ENCODE measurements at regions of chr13 and their contacts with region 1.

Region 1: GRCh38 chr13:99057310-99057975 is 79.6 kb upstream of the DOCK9 start:
- DNase-seq: no peak
- H3K4me3 ChIP-seq: no peak overlapping the region
- H3K4me3 Mint-ChIP-seq: peak overlapping the region in 1 of 8 donors; percentile 6
- H3K27ac ChIP-seq: no peak overlapping the region
- H3K27ac Mint-ChIP-seq: peak overlapping the region; percentile 29 to 79 (median 64)
- H3K4me1 ChIP-seq: peaks cover 84% of the 10 kb centered on the region
- H3K4me1 Mint-ChIP-seq: peaks cover 55 to 94% (median 80%) of the 10 kb centered on the region in 4 donors
- H3K27me3 ChIP-seq: no peaks in the 10 kb centered on the region
- H3K27me3 Mint-ChIP-seq: no peaks in the 10 kb centered on the region

Region 2: GRCh38 chr13:99041788-99042187 is 15.7 kb before region 1 on chr13:
- CTCF ChIA-PET with region 1: interaction called, 4 read pairs
- POLR2A ChIA-PET with region 1: interaction called, 27 read pairs
- intact Hi-C with region 1: loop called (anchors 1 kb)
- DNase-seq: peak in 1 of 5 donors; percentile 41
- H3K4me3 ChIP-seq: no peak overlapping the region
- H3K4me3 Mint-ChIP-seq: peak overlapping the region; percentile 2 to 75 (median 36)
- H3K27ac ChIP-seq: peak overlapping the region; percentile 16
- H3K27ac Mint-ChIP-seq: peak overlapping the region; percentile 65 to 98 (median 94)
- H3K4me1 ChIP-seq: peaks cover 72% of the 10 kb centered on the region
- H3K4me1 Mint-ChIP-seq: peaks cover 65 to 91% (median 78%) of the 10 kb centered on the region in 4 donors
- H3K27me3 ChIP-seq: no peaks in the 10 kb centered on the region
- H3K27me3 Mint-ChIP-seq: no peaks in the 10 kb centered on the region

Region 3: DNA sequence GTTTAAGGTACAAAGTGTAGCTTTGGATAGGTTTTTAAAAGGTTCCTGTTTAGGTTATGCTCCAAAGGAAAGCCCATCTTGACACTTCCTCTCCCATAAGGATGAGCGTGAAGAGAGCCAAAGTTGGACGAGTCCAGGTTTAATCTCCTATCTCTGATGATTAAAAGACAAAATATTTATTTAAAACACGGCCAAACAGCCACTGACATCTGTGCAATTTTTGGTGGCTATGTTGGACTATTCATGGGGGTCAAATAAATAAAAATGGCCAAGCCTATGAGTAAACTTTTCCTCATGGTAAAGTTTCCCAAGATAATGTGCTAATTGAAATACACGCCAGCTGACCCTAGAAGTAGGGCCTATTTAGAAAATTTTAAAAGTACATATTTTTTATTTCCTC is 10.6 kb before region 1 on chr13:
- CTCF ChIA-PET with region 1: interaction called, 4 read pairs
- POLR2A ChIA-PET with region 1: interaction called, 27 read pairs
- intact Hi-C with region 1: loop called (anchors 1 kb)
- DNase-seq: no peak
- H3K4me3 ChIP-seq: peak overlapping the region; percentile 1 to 32
- H3K4me3 Mint-ChIP-seq: peak overlapping the region; percentile 70 to 90 (median 81)
- H3K27ac ChIP-seq: peak overlapping the region; percentile 71
- H3K27ac Mint-ChIP-seq: peak overlapping the region; percentile 91 to 98 (median 95)
- H3K4me1 ChIP-seq: peaks cover 99% of the 10 kb centered on the region
- H3K4me1 Mint-ChIP-seq: peaks cover 79 to 100% (median 89%) of the 10 kb centered on the region in 4 donors
- H3K27me3 ChIP-seq: no peaks in the 10 kb centered on the region
- H3K27me3 Mint-ChIP-seq: no peaks in the 10 kb centered on the region

Measured in CD4-positive, alpha-beta memory T cell (primary cell).